ENCODE measurements at regions of chr10 and their contacts with region 1.

Region 1: DNA sequence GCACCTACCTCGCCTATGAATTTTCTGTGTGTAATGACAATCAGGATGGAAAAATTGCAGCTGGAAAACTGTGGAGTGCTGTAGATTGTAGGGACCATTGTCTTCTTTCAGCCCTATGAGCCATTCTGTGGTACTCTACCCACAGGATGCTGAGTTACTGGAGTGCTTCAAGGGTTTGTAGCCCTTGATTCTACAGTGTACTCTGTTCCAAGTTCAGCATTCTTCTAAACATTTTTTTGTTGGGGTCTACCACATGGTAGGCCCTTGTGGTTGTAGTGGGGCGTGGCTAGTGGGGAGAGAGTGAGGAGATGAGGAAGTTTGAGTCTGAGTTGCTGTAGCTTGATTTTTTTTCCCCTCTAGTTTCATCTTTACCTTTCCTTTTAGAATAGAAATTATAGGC is 33.5 kb downstream of the REEP3 start:
- DNase-seq: peak; percentile 60
- H3K4me3 ChIP-seq: peak overlapping the region; percentile 1; the same call in 1 of the 2 replicates
- H3K27ac ChIP-seq: peak overlapping the region; percentile 99
- H3K4me1 ChIP-seq: peaks cover 36% of the 10 kb centered on the region
- H3K27me3 ChIP-seq: no peaks in the 10 kb centered on the region
- CTCF ChIP-seq: no peak

Region 2: DNA sequence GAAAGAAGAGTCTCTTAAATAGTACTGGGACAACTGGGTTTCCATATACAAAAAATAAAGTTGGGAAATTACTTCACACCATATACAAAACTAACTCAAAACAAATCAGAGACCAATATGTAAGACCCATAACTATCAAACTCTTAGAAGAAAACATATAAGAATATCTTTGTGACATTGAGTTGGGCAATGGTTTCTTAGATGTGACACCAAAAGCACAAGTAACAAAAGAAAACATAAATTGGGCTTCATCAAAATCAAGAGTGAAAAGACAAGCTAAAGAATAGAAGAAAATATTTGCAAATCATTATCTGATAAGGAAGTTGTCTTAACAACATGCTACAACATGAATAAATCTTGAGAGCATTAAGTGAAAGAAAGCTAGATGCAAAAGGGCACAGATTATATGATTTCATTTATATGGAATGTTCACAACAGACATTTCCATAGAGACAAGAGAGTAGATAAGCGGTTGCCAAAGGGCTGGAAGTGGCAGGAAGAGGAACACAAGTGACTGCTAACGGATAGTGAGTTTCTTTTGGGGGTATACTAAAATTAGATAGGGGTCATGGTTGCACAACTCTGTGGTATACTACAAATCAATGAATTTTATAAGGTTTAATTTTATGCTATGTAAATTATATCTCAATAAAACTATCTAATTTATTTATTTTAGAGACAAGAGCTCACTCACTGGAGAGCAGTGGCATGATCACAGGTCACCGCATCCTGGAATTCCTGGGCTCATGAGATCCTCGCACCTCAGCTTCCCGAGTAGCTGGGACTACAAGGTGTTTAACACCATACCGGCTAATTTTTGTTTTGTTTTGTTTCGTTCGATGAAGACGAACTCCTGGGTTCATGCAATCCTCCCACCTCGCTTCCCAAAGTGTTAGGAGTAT is 124.3 kb before region 1 on chr10:
- CTCF ChIA-PET with region 1: no interaction called
- POLR2A ChIA-PET with region 1: no interaction called
- intact Hi-C with region 1: loop called (anchors 2 kb)
- DNase-seq: peak in 1 of 2 experiments; percentile 69
- H3K4me3 ChIP-seq: no peak overlapping the region
- H3K27ac ChIP-seq: no peak overlapping the region
- H3K4me1 ChIP-seq: peaks cover 13% of the 10 kb centered on the region
- H3K27me3 ChIP-seq: no peaks in the 10 kb centered on the region
- CTCF ChIP-seq: no peak

Region 3: DNA sequence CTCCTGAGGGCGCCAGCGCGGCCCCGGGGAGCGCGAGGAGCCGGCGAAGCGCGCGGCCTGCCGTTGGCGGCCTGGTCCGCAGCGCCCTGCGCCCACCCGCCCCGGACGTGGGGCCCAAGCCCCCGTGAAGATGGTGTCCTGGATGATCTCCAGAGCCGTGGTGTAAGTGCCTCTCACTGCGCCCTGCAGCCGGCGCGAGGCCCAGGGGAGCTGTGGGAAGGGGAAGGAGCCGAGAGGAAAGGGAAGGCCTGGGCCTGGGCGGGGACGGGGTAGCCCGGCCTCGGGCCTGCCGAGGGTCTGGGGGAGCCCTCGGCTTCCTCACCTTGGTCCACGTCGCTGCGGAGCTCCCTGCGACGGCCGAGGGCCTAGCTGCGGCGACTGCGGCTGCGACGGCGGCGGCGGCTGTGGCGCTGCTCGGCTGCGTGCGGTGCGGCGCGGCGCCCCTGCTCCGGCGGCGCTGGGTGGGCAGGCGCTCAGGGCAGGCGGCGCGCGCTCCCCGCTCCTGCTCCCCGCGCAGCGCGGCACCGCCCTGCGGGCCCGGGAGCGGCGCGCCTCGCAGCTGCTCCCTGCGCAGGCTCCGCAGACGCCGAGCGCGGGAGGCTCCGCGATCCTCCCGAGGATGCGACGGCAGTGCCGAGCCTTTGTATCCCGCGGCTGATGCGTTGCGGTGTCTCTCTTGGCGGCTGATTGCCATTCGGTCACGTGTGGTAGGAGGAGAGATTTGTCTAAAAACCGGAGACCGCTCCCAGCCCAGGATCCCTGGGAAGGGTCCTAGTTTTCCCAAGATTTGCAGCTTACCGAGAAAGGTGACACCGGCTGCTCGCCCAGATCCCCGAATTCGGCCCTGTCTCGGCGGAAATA is 33.0 kb before region 1 on chr10:
- CTCF ChIA-PET with region 1: no interaction called
- POLR2A ChIA-PET with region 1: interaction called, 13 read pairs
- intact Hi-C with region 1: loop called (anchors 1 kb)
- DNase-seq: peak; percentile 54 to 74
- H3K4me3 ChIP-seq: peak overlapping the region; percentile 74
- H3K27ac ChIP-seq: peak overlapping the region; percentile 89
- H3K4me1 ChIP-seq: peaks cover 39% of the 10 kb centered on the region
- H3K27me3 ChIP-seq: no peaks in the 10 kb centered on the region
- CTCF ChIP-seq: no peak

Region 4: GRCh38 chr10:63582690-63583089 is 28.0 kb after region 1 on chr10:
- CTCF ChIA-PET with region 1: no interaction called
- POLR2A ChIA-PET with region 1: no interaction called
- intact Hi-C with region 1: no loop called
- DNase-seq: no peak
- H3K4me3 ChIP-seq: no peak overlapping the region
- H3K27ac ChIP-seq: no peak overlapping the region
- H3K4me1 ChIP-seq: no peaks in the 10 kb centered on the region
- H3K27me3 ChIP-seq: no peaks in the 10 kb centered on the region
- CTCF ChIP-seq: no peak